Head of caudate nucleus (tissue), 42 donors: ENCODE measurements at regions of chr3 and their contacts with region 1.

Region 1: DNA sequence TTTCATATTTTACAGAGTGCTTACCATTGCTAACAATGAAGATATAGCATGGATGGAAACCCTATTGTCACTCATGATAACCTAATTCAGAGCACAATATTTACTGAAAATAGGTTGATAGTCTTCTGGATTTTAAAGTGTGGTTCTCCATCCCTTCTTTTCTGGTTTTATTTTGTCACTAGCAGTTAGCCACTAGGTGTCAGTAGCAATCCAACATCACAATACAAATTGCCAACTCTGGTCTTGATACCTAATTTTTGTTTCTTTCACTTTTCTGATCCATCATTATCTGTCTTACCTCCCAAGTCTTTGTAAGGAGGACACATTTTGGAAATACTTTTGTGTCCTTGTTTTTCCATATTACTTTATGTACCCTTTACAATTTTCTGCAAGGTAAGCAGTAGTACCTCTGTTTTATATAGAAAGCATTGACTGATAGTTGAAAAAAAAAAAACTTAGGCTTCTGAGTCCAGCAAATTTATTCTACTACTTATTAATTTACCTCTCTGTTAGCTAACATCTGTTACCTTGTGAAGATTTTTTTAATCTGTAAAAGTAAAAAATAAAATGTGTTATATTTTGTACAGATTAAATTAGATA is 28.3 kb upstream of the CRYBG3 start:
- DNase-seq: peak in 8 of 42 donors; percentile 14 to 63 (median 24)

Region 2: DNA sequence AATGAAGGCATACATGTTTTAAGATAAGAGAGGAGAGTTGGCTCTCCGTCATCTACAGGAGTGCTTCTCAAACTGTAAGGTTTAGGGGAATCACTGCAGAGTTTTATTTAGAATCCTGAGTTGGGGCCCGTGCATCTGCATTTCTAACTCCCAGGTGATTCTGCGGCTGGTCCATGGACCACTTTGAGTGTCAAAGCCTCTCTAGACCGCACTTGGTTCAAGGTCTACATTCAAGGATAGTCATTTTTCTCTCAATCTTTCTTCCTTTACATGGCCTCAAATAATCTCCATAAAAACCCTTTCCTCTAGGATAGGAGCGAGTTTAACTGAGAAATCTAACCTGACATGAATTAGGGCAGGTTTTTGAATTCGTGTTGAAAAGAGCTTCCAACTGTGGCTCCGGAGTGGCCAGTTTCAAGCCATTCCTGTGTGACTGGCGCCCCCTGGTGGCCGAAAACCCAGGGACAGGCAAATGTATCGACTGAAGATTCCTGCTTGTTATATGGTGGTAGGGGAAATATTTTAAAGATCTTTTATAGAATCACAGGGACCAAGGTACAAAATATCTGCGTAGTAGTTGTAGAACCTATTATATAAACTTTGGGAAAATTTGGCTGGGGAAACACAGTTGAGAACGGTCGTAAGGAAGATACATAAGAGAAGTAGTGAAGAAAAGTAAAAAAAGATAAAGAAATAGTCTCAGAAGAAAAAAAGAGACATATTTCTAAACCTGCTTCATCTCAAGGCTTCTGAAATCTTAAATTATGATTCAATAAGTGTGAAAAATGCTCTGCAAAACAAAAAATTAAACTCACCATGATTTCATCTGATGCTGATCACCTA is 229.7 kb after region 1 on chr3:
- intact Hi-C with region 1: loop called (anchors 5 kb)
- DNase-seq: peak; percentile 81 to 100 (median 96)